AG04449 (cell line): ENCODE measurements at regions of chr22 and their contacts with region 1.

Region 1: GRCh38 chr22:50244420-50245213 is at the start of gene TUBGCP6:
- DNase-seq: peak; percentile 24
- H3K4me3 ChIP-seq: peak within 1 kb of the TSS; percentile 98
- CTCF ChIP-seq: peak; percentile 19

Region 2: GRCh38 chr22:50367778-50368500 is 123.3 kb after region 1 on chr22:
- CTCF ChIA-PET with region 1: interaction called, 25 read pairs
- POLR2A ChIA-PET with region 1: no interaction called
- DNase-seq: no peak
- H3K4me3 ChIP-seq: no peak overlapping the region
- CTCF ChIP-seq: no peak